ENCODE measurements at regions of chr5 and their contacts with region 1.

Region 1: GRCh38 chr5:170070556-170071412 is 34.9 kb upstream of the FOXI1 start:
- DNase-seq: no peak
- CTCF ChIP-seq: peak; percentile 24

Region 2: GRCh38 chr5:169838688-169839087 is 232.1 kb before region 1 on chr5:
- CTCF ChIA-PET with region 1: no interaction called
- POLR2A ChIA-PET with region 1: no interaction called
- DNase-seq: peak; percentile 35
- CTCF ChIP-seq: no peak

Region 3: DNA sequence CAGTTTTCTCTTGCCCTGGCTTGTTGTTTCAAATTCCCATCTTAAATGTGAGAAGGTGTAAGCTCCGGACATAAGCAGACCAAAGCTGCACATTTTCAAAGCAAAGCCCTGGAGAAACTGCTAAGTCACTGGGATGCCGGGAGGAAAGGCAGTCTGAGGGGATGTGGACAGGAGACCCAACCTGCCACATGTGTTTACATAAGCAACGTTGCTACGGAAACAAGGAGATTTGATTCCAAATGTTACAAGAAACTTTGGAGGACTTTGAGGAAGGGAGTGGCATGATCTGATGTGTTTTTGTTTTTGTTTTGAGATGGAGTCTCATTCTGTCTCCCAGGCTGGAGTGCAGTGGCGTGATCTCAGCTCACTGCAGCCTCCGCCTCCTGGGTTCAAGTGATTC is 64.8 kb before region 1 on chr5:
- CTCF ChIA-PET with region 1: no interaction called
- POLR2A ChIA-PET with region 1: no interaction called
- DNase-seq: no peak
- CTCF ChIP-seq: no peak

Region 4: GRCh38 chr5:170056561-170057267 is 14.1 kb before region 1 on chr5:
- CTCF ChIA-PET with region 1: interaction called, 26 read pairs
- POLR2A ChIA-PET with region 1: no interaction called
- DNase-seq: no peak
- CTCF ChIP-seq: no peak

Measured in GM10248 (cell line).